ENCODE measurements at regions of chr1 and their contacts with region 1.

Region 1: DNA sequence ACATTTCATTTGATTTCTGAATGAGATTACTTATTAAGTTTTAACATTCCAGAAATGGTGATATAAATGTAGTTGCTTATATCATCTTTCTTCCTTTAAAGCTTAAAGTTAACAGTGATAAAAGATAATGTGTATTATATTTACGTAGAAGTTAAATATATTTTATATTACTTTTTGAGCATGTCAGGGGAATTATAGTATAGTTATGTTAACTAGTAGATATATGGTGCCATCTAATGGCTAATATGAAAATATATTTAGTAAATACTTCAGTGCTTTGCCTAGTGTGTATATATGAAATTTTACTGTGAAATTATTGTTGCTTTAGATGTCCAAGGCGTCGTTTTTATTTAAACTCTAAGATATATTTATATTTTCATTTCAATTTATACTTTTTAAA is 51.5 kb downstream of the SYT14 start:
- DNase-seq: peak; percentile 60

Region 2: DNA sequence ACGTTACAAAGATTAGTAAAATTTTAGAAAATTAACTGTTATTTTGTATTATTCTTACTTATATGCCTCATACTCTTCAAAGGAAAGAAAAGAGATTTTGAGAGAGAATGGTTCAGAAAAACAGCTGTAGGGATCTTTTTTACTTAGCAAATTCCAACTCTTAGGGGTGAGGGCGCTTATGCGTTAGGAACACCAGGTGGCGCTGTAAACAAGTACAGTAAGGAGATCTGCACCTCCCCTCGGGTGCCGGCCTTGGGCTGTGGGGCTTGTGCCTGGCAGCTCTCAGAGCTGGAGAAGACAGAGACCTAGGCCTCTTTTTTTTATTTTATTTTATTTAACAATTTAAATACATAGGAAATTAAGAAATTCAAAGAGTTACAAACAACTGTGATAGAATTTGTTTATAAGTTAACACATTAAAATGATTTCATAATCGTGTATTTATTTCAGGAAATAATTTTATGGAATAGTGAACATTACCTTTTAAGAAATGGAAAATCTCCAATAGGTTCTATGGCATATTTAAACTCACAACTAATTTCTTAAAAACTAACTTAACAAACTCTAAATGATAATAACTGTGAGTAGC is 129.1 kb before region 1 on chr1:
- in situ Hi-C with region 1: loop called (anchors 25 kb)
- DNase-seq: peak; percentile 89

Measured in ACHN (cell line).